Activated T-helper 1 cell treated with anti-CD3 and anti-CD28 coated beads, Interleukin-12 subunit alpha, Interleukin-12 subunit beta, Interleukin-2, Interleukin-4 antibody, amounts not matched to agents 30 ng/mL and 10 ng/mL and 1 ng/mL, durations not matched to agents 14 hours and 24 hours and 36 hours (primary cell): ENCODE measurements at regions of chr16 and their contacts with region 1.

Region 1: GRCh38 chr16:4506450-4506849 is 30.3 kb downstream of the HMOX2 start:
- DNase-seq: peak; percentile 51
- H3K4me3 Mint-ChIP-seq: peak overlapping the region; percentile 70
- H3K27ac Mint-ChIP-seq: peak overlapping the region; percentile 79
- H3K4me1 Mint-ChIP-seq: peaks cover 48% of the 10 kb centered on the region
- H3K27me3 Mint-ChIP-seq: no peaks in the 10 kb centered on the region

Region 2: DNA sequence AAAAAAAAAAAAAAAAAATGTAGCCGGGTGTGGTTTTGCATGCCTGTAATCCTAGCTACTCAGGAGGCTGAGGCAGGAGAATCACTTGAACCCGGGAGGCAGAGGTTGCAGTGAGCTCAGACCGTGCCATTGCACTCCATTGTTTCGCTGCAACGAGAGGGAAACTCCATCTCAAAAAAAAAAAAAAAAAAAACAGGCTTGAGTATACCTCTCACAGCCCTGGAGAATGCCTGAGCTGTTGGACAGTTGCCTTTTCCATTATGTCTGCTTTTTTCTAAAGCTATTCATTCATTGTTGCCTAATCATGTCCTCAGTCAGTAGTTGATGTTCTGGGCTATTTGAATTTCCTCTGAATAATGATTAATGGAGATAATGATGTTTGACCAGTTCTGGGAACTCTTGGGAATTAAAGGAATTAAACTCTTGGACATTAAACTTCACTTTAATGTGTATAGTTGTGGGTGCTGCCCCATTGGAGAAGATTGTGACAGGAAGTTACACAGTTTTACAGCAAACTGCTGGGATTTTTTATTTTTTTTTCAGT is 18.4 kb before region 1 on chr16:
- intact Hi-C with region 1: loop called (anchors 1 kb)
- DNase-seq: no peak
- H3K4me3 Mint-ChIP-seq: peak overlapping the region; percentile 48
- H3K27ac Mint-ChIP-seq: peak overlapping the region; percentile 76
- H3K4me1 Mint-ChIP-seq: peaks cover 45% of the 10 kb centered on the region
- H3K27me3 Mint-ChIP-seq: no peaks in the 10 kb centered on the region

Region 3: GRCh38 chr16:4529085-4530060 is 22.9 kb after region 1 on chr16:
- intact Hi-C with region 1: loop called (anchors 1 kb)
- DNase-seq: no peak
- H3K4me3 Mint-ChIP-seq: peak overlapping the region; percentile 75
- H3K27ac Mint-ChIP-seq: peak overlapping the region; percentile 93
- H3K4me1 Mint-ChIP-seq: peaks cover 19% of the 10 kb centered on the region
- H3K27me3 Mint-ChIP-seq: no peaks in the 10 kb centered on the region

Region 4: DNA sequence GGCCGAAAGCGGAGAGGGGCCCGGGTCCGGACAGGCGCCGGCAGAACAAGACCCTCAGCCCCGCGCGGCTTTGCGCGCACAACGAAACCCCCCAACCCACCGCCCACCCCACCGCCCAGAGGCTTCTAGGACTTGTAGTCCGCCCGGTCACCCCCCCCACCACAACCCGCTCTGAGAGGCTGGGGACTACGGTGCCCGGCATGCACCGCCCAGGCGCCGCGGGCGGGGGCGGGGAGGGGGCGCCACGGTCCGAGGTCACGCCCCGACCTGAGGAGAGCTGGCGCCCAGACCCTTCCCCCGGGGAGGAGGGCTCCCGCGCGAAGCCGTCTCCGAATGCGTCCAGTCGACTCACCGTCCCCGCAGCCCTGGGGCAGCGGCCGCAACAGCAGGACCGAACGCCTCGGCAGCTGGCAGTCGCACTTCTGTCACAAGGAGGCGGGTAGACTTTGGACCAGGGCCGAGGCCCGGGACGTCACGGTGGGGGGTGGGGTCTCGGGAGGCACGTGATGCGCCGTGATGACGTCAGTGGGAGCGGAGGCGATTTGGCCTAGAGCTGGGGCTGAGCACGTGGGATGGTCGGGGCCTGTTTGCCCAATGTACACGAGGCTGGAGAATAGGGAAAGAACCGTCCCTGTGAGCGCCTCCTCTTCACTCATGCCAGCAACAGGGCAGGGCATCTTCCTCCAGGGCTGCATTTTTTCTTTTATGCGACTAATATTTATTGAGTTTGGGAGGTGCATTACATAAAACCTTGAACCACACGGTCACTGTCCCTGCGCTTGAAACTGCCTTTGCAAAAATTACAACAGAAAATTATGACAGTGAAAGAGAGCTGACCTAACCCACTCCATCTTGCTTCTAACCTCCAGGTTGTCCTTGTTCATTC is 32.1 kb after region 1 on chr16 and contains the start of gene CDIP1:
- intact Hi-C with region 1: loop called (anchors 1 kb)
- DNase-seq: peak; percentile 86
- H3K4me3 Mint-ChIP-seq: peak within 1 kb of the TSS; percentile 80
- H3K27ac Mint-ChIP-seq: peak within 1 kb of the TSS; percentile 82
- H3K4me1 Mint-ChIP-seq: peaks cover 40% of the 10 kb centered on the region
- H3K27me3 Mint-ChIP-seq: peaks cover 5% of the 10 kb centered on the region
- total RNA-seq, gene CDIP1: 61.6 and 62.7 TPM in 2 replicates

Region 5: DNA sequence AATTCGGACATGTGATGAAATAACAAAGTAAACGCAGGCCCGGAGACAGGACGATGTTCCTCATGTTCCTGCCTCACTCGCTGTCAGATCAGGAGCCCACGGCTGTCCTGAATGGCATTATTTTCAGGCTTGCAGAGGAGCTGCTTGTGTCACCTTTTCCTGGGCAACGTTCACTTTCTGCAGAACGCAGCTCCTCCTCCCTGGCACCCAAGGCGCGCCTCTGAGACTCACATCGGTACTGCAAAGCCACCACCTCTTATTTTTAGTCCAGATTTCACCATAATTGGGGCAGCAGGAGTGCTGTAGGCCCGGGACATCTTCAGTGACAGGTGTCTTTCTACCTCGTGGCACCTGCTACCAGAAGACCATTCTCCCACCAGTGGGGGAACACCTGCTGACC is 41.7 kb after region 1 on chr16:
- intact Hi-C with region 1: loop called (anchors 1 kb)
- DNase-seq: no peak
- H3K4me3 Mint-ChIP-seq: no peak overlapping the region
- H3K27ac Mint-ChIP-seq: no peak overlapping the region
- H3K4me1 Mint-ChIP-seq: peaks cover 10% of the 10 kb centered on the region
- H3K27me3 Mint-ChIP-seq: peaks cover 16% of the 10 kb centered on the region

Region 6: DNA sequence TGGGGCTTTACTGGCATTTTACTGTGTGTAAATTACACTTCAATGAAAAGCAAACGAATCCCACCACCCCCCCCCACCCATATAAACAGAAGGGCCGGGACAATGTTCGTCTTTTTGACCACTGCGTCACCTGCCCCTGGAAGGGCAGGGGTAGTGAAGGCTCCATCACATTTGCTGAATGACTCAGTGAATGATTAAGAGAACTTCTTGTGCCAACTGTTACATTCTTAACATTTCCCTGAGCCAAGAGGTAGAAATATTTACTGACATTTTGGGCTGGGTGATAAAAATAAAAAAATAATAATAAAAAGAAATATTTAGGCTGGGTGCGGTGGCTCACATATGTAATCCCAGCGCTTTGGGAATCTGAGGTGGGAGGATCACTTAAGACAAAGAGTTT is 73.8 kb after region 1 on chr16:
- intact Hi-C with region 1: loop called (anchors 1 kb)
- DNase-seq: no peak
- H3K4me3 Mint-ChIP-seq: no peak overlapping the region
- H3K27ac Mint-ChIP-seq: no peak overlapping the region
- H3K4me1 Mint-ChIP-seq: no peaks in the 10 kb centered on the region
- H3K27me3 Mint-ChIP-seq: no peaks in the 10 kb centered on the region

Region 7: GRCh38 chr16:4957720-4958509 is 451.5 kb after region 1 on chr16 and contains the start of gene SEC14L5:
- intact Hi-C with region 1: loop called (anchors 10 kb)
- DNase-seq: peak; percentile 90
- H3K4me3 Mint-ChIP-seq: peak within 1 kb of the TSS; percentile 85
- H3K27ac Mint-ChIP-seq: peak within 1 kb of the TSS; percentile 26
- H3K4me1 Mint-ChIP-seq: peaks cover 22% of the 10 kb centered on the region
- H3K27me3 Mint-ChIP-seq: peaks cover 21% of the 10 kb centered on the region
- total RNA-seq, gene SEC14L5: not detected in 2 replicates